Ovary (tissue), 10 donors: ENCODE measurements at regions of chr12 and their contacts with region 1.

Region 1: GRCh38 chr12:98572010-98572409 is 21.5 kb upstream of the SLC25A3 start:
- DNase-seq: no peak
- H3K4me3 ChIP-seq: no peak overlapping the region
- H3K27ac ChIP-seq: no peak overlapping the region
- H3K4me1 ChIP-seq: no peaks in the 10 kb centered on the region
- H3K27me3 ChIP-seq: no peaks in the 10 kb centered on the region
- CTCF ChIP-seq: no peak
- EP300 ChIP-seq: no peak
- POLR2A ChIP-seq: no peak

Region 2: GRCh38 chr12:98618952-98619351 is 46.9 kb after region 1 on chr12:
- intact Hi-C with region 1: no loop called
- DNase-seq: no peak
- H3K4me3 ChIP-seq: no peak overlapping the region
- H3K27ac ChIP-seq: no peak overlapping the region
- H3K4me1 ChIP-seq: no peaks in the 10 kb centered on the region
- H3K27me3 ChIP-seq: no peaks in the 10 kb centered on the region
- CTCF ChIP-seq: no peak
- EP300 ChIP-seq: no peak
- POLR2A ChIP-seq: no peak

Region 3: GRCh38 chr12:98669751-98670150 is 97.7 kb after region 1 on chr12:
- intact Hi-C with region 1: loop called in 1 of 4 experiments (anchors 10 kb)
- DNase-seq: no peak
- H3K4me3 ChIP-seq: no peak overlapping the region
- H3K27ac ChIP-seq: no peak overlapping the region
- H3K4me1 ChIP-seq: no peaks in the 10 kb centered on the region
- H3K27me3 ChIP-seq: no peaks in the 10 kb centered on the region
- CTCF ChIP-seq: no peak
- EP300 ChIP-seq: no peak
- POLR2A ChIP-seq: no peak